MCF 10A (cell line): ENCODE measurements at regions of chr22 and their contacts with region 1.

Region 1: DNA sequence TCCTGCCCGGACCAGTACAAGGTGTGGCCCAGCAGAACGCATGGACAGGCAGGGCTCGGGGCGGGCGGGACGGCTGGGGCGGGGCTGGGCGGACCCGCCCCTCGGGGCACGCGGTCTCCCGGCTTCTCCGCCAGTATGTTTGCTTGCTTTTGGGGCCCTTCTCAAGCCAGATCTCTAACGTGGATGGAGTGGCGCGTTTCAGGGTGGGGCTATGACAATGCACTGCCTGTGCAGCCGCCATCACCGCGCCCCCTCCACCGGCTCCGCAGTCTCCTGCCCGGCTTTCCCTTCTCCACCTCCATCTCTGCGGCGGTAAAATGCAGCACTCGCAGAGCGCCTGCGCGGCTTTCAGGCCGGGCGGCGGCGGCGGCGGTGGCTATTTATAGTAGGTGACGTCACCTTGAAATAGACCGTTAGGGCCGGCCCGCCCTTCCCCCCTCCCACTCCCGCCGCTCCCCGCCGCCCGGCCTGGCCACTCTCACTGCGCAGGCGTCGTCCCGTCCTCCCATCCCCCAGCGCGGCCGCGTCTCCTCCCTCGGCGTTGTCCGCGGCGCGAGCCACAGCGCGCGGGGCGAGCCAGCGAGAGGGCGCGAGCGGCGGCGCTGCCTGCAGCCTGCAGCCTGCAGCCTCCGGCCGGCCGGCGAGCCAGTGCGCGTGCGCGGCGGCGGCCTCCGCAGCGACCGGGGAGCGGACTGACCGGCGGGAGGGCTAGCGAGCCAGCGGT is at the start of gene YWHAH:
- DNase-seq: peak; percentile 92
- H3K4me3 Mint-ChIP-seq: no peak within 1 kb of the TSS
- H3K27ac Mint-ChIP-seq: peak within 1 kb of the TSS; percentile 55
- H3K4me1 Mint-ChIP-seq: peaks cover 6% of the 10 kb centered on the region
- H3K27me3 Mint-ChIP-seq: no peaks in the 10 kb centered on the region
- CTCF ChIP-seq: no peak
- total RNA-seq, gene YWHAH: 64.2 and 79.9 TPM in 2 replicates

Region 2: DNA sequence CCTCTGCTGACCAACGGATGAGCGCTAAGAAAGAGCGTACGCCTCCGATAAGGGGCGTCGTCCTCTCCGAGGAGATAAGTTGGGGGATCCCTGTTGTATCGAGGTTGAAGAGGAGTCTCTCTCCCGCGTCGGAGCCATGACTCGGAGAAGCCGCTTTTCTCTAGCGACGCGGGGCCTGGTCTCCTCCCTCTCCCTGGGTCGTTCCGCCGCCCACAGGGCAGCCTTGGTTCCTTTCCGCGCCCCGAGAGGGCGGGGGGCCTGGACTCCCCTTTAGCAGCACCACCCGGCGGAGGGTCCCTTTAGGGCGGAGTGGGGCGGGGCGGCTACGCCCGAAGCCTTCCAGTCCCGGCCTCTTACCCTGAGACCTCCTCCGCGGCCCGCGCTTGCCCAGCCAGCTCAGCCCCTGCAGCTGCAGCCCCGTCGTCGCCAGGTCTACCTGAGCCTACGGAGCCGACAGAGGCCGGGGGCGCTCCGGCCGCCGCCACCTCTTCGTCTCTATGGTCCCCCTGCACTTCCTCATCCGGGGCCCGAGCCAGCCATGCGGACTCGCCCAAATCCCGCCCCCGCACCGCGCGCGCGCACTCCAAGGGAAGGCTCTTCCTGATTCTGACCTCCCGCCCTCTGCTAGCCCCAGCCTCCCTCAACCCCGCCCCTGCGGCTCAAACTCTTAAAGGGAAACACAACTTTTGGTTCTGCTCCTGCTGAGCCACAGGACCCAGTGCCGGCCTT is 194.3 kb before region 1 on chr22 and contains the start of gene PRR14L:
- CTCF ChIA-PET with region 1: interaction called, 3 read pairs
- POLR2A ChIA-PET with region 1: interaction called, 6 read pairs
- intact Hi-C with region 1: loop called (anchors 2 kb)
- DNase-seq: peak; percentile 97
- H3K4me3 Mint-ChIP-seq: peak within 1 kb of the TSS; percentile 80
- H3K27ac Mint-ChIP-seq: peak within 1 kb of the TSS; percentile 90
- H3K4me1 Mint-ChIP-seq: peaks cover 32% of the 10 kb centered on the region
- H3K27me3 Mint-ChIP-seq: no peaks in the 10 kb centered on the region
- CTCF ChIP-seq: no peak
- total RNA-seq, gene PRR14L: 37.4 and 55.0 TPM in 2 replicates

Region 3: GRCh38 chr22:31829505-31829904 is 114.6 kb before region 1 on chr22:
- CTCF ChIA-PET with region 1: interaction called, 5 read pairs
- POLR2A ChIA-PET with region 1: interaction called, 13 read pairs
- intact Hi-C with region 1: loop called (anchors 1 kb)
- DNase-seq: peak; percentile 93
- H3K4me3 Mint-ChIP-seq: peak overlapping the region; percentile 10
- H3K27ac Mint-ChIP-seq: peak overlapping the region; percentile 78
- H3K4me1 Mint-ChIP-seq: peaks cover 13% of the 10 kb centered on the region
- H3K27me3 Mint-ChIP-seq: no peaks in the 10 kb centered on the region
- CTCF ChIP-seq: no peak

Region 4: DNA sequence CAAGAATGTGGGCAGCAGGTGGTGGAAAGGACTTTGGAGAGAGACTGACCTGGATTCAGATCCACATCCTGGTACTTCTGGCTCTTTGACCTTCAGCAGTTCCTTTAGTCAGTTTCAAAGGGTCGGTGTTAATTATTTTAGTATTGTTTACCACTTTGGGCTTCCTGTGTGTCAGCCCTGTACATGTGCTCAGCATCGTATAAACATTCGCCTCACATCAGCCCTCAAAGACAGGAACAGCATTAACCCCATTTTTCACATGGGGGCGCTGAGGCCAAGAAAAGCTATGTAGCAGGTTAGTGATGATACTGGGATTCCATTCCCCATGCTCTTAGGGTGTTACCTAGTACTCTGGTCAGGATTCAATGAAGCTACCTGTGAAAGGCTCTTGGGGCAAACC is 71.9 kb before region 1 on chr22:
- CTCF ChIA-PET with region 1: interaction called, 59 read pairs
- POLR2A ChIA-PET with region 1: interaction called, 14 read pairs
- intact Hi-C with region 1: loop called (anchors 1 kb)
- DNase-seq: peak; percentile 13
- H3K4me3 Mint-ChIP-seq: no peak overlapping the region
- H3K27ac Mint-ChIP-seq: no peak overlapping the region
- H3K4me1 Mint-ChIP-seq: peaks cover 16% of the 10 kb centered on the region
- H3K27me3 Mint-ChIP-seq: no peaks in the 10 kb centered on the region
- CTCF ChIP-seq: no peak